HCT116 (cell line): ENCODE measurements at regions of chr17 and their contacts with region 1.

Region 1: GRCh38 chr17:45852535-45853297 is 8.0 kb downstream of the SPPL2C start:
- DNase-seq: peak; percentile 60
- ATAC-seq: peak; percentile 81
- H3K4me3 ChIP-seq: peak overlapping the region in 1 of 2 experiments; percentile 25; a peak in 3 of 4 replicates
- H3K27ac ChIP-seq: no peak overlapping the region
- H3K4me1 ChIP-seq: peaks cover 0 to 6% of the 10 kb centered on the region in 2 experiments; a peak in 2 of 4 replicates
- H3K27me3 ChIP-seq: no peaks in the 10 kb centered on the region
- CTCF ChIP-seq: peak; percentile 96 to 99 (median 99)
- POLR2A ChIP-seq: no peak
- RAD21 ChIP-seq: peak; percentile 98

Region 2: DNA sequence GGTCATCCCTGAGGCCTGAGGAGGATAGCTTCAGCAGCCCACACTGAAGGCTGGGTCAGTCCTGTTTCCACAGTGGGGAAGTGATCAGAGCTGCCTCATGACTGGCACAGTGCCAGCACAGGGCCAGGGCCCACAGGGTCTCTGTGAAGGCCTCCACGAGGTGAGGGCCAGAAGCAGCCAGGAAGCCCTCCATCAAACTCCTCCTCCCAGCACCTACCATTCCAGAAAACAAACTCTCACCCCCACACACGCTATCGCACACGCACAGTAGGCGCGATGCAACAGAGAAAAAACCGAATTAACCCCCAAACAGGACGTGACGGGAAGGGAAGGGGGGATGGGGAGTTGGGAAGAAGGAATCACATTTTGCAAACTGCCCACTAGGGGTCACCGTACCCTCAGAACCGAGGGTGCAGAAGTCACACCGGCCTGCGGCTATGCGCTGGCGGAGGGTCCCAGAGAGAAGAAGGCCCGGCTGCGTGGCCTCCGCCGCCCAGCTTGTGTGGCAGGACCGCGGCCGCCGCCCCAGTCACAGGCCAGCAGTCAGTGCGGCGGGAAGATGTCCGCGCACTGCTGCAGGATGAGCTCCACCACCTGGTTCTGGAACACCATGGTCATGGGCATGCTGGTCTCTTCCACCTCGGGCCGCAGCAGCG is 457.7 kb before region 1 on chr17:
- CTCF ChIA-PET with region 1: interaction called, 4 read pairs
- POLR2A ChIA-PET with region 1: no interaction called
- RAD21 ChIA-PET with region 1: interaction called in 1 of 2 experiments, 6 read pairs
- intact Hi-C with region 1: loop called (anchors 1 kb)
- DNase-seq: peak; percentile 45
- ATAC-seq: peak; percentile 79
- H3K4me3 ChIP-seq: no peak overlapping the region
- H3K27ac ChIP-seq: no peak overlapping the region
- H3K4me1 ChIP-seq: peaks cover 0 to 16% of the 10 kb centered on the region in 2 experiments; a peak in 2 of 4 replicates
- H3K27me3 ChIP-seq: no peaks in the 10 kb centered on the region
- CTCF ChIP-seq: peak; percentile 79 to 90 (median 86)
- POLR2A ChIP-seq: no peak
- RAD21 ChIP-seq: peak; percentile 93

Region 3: DNA sequence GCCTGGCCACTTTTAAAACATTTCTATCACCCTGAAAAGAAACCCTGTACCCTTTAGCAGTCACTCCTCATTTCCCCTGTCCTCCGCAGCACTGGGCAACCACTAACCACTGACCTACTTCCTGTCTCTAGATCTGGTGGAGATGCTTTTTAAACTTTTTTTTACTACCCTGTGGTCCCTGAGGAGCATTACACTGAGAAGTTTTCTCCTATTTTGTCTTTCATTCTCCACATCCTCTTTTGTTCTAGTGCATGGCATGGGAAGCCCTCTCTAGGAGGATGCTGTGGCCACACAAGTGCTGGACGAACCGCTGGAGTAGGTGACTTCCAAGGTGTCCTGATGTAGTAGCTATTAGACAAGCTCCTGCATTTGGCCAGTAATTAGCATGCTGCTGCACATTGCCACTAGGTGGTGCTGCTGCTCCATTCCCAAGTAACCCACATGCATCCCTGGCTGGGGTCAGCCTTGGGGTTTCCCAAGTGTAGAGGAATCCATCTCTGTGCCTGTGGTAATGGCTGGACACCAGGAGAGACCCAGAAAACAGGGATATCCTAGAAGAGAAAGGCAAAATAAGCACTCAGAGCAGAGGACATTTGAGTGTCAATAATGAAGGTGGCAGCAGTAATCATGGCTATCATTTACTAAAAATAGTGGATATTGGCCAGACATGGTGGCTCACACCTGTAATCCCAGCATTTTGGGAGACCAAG is 212.4 kb before region 1 on chr17:
- CTCF ChIA-PET with region 1: interaction called, 46 read pairs
- POLR2A ChIA-PET with region 1: no interaction called
- RAD21 ChIA-PET with region 1: interaction called, 3 read pairs
- intact Hi-C with region 1: loop called (anchors 1 kb)
- DNase-seq: peak; percentile 78
- ATAC-seq: peak; percentile 97
- H3K4me3 ChIP-seq: no peak overlapping the region
- H3K27ac ChIP-seq: no peak overlapping the region
- H3K4me1 ChIP-seq: no peaks in the 10 kb centered on the region
- H3K27me3 ChIP-seq: no peaks in the 10 kb centered on the region
- CTCF ChIP-seq: peak; percentile 95 to 100 (median 100)
- POLR2A ChIP-seq: no peak
- RAD21 ChIP-seq: peak; percentile 99

Region 4: GRCh38 chr17:45648642-45649041 is 204.1 kb before region 1 on chr17:
- CTCF ChIA-PET with region 1: interaction called, 11 read pairs
- POLR2A ChIA-PET with region 1: no interaction called
- RAD21 ChIA-PET with region 1: interaction called in 1 of 2 experiments, 7 read pairs
- intact Hi-C with region 1: no loop called
- DNase-seq: no peak
- ATAC-seq: peak; percentile 73
- H3K4me3 ChIP-seq: no peak overlapping the region
- H3K27ac ChIP-seq: no peak overlapping the region
- H3K4me1 ChIP-seq: no peaks in the 10 kb centered on the region
- H3K27me3 ChIP-seq: no peaks in the 10 kb centered on the region
- CTCF ChIP-seq: peak; percentile 55 to 78 (median 74); a peak in 5 of 6 replicates
- POLR2A ChIP-seq: no peak
- RAD21 ChIP-seq: peak; percentile 58

Region 5: DNA sequence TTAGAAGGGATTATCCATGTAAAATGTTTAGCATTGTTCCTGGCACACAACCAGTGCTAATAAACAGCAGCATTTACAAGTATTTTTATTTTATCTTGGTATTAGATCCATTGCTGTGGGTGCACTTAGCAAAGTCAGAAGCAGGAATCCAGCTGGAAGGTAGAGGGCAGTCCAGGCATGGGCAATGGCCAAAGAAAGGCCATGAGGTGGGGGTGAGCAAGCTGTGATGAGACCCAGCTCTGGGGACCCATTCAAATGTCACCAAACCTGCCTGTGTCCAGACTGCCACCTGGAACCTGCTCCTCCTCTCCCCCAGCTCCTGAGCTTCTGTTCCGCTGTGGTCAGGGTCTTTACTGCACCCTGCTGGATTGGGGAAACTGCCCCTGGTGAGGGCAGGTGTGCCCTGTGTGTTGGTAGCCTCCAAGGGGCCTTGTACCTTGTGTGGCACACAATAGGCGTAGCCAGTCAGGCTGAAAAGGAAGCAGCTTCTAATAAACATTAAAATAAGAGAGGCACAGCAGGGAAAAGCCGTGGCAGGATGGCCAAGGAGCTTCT is 186.6 kb before region 1 on chr17:
- CTCF ChIA-PET with region 1: interaction called, 11 read pairs
- POLR2A ChIA-PET with region 1: no interaction called
- RAD21 ChIA-PET with region 1: no interaction called
- intact Hi-C with region 1: no loop called
- DNase-seq: no peak
- ATAC-seq: 0 out of 2 replicates have a peak, but pooled peaks have one; percentile 23
- H3K4me3 ChIP-seq: no peak overlapping the region
- H3K27ac ChIP-seq: no peak overlapping the region
- H3K4me1 ChIP-seq: no peaks in the 10 kb centered on the region
- H3K27me3 ChIP-seq: 0 out of 2 replicates have a peak, but pooled peaks cover 11% of the 10 kb centered on the region
- CTCF ChIP-seq: peak; percentile 49 to 78 (median 53)
- POLR2A ChIP-seq: no peak
- RAD21 ChIP-seq: peak; percentile 84

Region 6: DNA sequence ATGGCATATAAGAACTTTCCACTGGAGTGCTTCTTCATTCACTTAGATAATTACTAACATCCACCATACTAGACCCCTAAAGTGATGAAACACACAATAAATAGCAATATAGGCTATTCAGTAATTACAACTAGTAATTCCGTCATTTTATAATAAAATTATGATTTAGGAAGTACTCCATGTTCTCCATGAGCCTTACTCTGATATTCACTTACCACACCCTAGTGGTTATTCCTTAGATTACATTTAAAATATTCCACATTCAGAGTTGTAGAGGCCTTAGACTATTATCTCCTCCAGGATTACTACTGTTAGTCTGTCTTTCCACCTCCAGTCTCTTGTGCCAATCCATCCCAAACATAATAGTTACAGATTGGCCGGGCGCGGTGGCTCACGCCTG is 208.7 kb after region 1 on chr17:
- CTCF ChIA-PET with region 1: no interaction called
- POLR2A ChIA-PET with region 1: no interaction called
- RAD21 ChIA-PET with region 1: no interaction called
- intact Hi-C with region 1: no loop called
- DNase-seq: peak; percentile 23
- ATAC-seq: peak; percentile 67
- H3K4me3 ChIP-seq: no peak overlapping the region
- H3K27ac ChIP-seq: no peak overlapping the region
- H3K4me1 ChIP-seq: peaks cover 18 to 38% of the 10 kb centered on the region in 2 experiments
- H3K27me3 ChIP-seq: no peaks in the 10 kb centered on the region
- CTCF ChIP-seq: peak; percentile 35 to 56 (median 45); a peak in 5 of 6 replicates
- POLR2A ChIP-seq: no peak
- RAD21 ChIP-seq: peak; percentile 41